GM12878 (cell line): ENCODE measurements at regions of chr17 and their contacts with region 1.

Region 1: DNA sequence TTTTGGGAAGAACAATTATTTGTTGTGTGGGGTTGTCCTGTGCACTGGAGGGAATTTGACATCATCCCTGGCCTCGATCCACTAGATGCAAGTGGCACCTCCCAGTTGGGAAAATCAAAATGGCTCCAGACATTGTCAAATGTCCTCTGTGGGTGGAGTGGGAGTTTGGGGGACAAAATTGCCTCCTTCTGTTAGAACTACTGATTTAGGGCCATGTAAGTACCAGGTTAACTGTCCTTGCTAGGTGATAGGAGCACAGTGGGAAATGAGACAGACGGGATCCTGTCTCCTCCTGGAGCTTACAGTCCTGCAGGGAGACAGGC is 56.8 kb downstream of the ARHGAP23 start:
- DNase-seq: peak; percentile 21
- ATAC-seq: no peak
- H3K4me3 ChIP-seq: peak overlapping the region; percentile 3; the same call in 1 of the 2 replicates
- H3K27ac ChIP-seq: peak overlapping the region; percentile 50
- H3K4me1 ChIP-seq: peaks cover 17% of the 10 kb centered on the region
- H3K27me3 ChIP-seq: no peaks in the 10 kb centered on the region
- CTCF ChIP-seq: no peak
- EP300 ChIP-seq: no peak
- POLR2A ChIP-seq: no peak
- RAD21 ChIP-seq: no peak

Region 2: DNA sequence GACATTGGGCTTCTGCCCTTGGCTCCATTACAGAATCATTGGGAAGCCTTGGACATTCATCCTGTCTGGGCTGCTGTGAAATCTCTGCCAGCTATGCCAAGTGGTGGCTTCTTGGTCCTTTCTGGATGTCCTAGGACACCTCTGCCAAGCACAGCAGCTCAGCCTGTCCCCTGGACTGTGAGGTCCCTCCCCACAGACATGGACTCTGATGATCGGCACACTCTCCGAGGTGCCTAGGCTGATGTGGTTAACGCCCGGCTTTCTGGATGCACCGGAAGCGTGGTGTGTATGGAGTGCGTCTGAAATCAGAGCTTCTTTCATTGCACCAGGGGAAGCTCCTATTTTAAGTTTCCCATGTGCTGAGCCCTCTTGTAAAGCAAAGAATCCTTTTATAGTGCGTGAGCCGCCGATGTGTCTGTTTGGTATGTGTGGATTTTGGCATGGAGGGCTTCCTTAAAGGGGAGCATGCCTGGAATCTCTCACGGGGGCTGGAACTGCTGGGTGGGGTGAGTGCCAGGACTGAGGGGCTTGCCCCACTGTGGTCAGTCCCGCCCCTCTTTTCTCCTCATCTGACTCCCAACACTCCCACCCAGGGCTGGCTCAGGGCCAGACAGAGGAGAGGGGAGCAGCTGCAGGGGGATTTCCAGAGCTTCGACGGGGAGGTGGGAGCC is 63.8 kb before region 1 on chr17:
- CTCF ChIA-PET with region 1: interaction called, 31 read pairs
- POLR2A ChIA-PET with region 1: interaction called, 4 read pairs
- RAD21 ChIA-PET with region 1: interaction called, 7 read pairs
- SMC1A ChIA-PET with region 1: interaction called, 11 read pairs
- in situ Hi-C with region 1: no loop called
- intact Hi-C with region 1: loop called (anchors 1 kb)
- DNase-seq: no peak
- ATAC-seq: no peak
- H3K4me3 ChIP-seq: no peak overlapping the region
- H3K27ac ChIP-seq: no peak overlapping the region
- H3K4me1 ChIP-seq: peaks cover 6% of the 10 kb centered on the region
- H3K27me3 ChIP-seq: peaks cover 4 to 6% of the 10 kb centered on the region in 2 experiments; a peak in 3 of 4 replicates
- CTCF ChIP-seq: no peak
- EP300 ChIP-seq: no peak
- POLR2A ChIP-seq: no peak
- RAD21 ChIP-seq: no peak

Region 3: DNA sequence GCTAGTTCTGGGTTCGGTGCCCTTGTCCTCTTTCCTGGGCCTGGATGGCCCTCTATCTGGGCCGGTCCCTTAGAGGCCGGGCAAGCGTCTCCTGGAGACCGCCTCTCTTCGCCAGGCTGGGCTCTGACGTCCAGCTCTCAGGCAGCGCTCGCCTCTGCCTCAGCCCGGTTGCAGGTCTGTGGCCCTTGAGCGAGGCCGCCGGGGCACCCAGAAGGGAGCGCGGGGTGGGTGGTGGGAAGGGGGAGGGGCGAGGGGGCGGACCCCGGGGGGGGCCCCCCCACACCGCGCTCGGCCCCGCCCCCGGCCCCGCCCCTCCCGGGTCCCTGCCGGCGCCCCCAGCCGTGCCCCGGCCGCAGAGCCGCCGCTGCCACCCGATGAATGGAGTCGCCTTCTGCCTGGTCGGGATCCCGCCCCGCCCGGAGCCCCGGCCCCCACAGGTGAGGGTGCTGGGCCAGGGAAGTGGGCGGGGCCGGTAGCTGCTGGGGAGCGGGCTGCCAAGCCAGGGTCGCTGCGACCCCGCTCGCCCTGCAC is 56.9 kb before region 1 on chr17 and contains the start of gene ARHGAP23:
- CTCF ChIA-PET with region 1: interaction called, 31 read pairs
- POLR2A ChIA-PET with region 1: interaction called, 4 read pairs
- RAD21 ChIA-PET with region 1: interaction called, 7 read pairs
- SMC1A ChIA-PET with region 1: interaction called, 8 read pairs
- in situ Hi-C with region 1: no loop called
- intact Hi-C with region 1: loop called (anchors 1 kb)
- DNase-seq: no peak
- ATAC-seq: peak; percentile 71
- H3K4me3 ChIP-seq: peak within 1 kb of the TSS; percentile 80
- H3K27ac ChIP-seq: no peak within 1 kb of the TSS
- H3K4me1 ChIP-seq: peaks cover 4% of the 10 kb centered on the region
- H3K27me3 ChIP-seq: no peaks in the 10 kb centered on the region; a peak in 1 of 4 replicates
- CTCF ChIP-seq: no peak
- EP300 ChIP-seq: no peak
- POLR2A ChIP-seq: no peak; the same call in 1 of the 2 replicates
- RAD21 ChIP-seq: no peak
- polyA plus RNA-seq, gene ARHGAP23: 0.23 to 0.35 TPM

Region 4: DNA sequence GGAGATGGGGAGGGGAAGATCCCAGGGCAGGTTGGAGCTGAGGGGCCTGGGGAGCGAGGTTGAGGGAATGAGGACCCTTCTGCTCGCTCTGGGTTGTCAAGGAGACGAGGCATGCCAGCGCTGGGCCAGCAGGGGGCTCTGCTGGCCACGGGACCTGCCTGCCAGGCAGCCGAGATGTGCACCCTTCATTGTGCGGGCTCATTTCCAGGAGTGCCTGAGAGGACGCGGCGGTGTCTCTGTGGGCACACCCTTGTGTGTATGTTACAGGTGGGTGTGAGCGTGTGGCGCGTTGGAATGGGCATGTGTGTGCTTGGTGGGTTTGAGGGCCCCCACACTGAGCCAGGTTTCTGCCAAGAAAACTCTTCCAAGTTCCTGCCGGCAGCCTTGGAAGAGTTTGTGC is 41.0 kb before region 1 on chr17:
- CTCF ChIA-PET with region 1: interaction called, 6 read pairs
- POLR2A ChIA-PET with region 1: no interaction called
- RAD21 ChIA-PET with region 1: no interaction called
- SMC1A ChIA-PET with region 1: interaction called, 4 read pairs
- in situ Hi-C with region 1: loop called (anchors 5 kb)
- intact Hi-C with region 1: loop called (anchors 1 kb)
- DNase-seq: no peak
- ATAC-seq: peak; percentile 94
- H3K4me3 ChIP-seq: no peak overlapping the region
- H3K27ac ChIP-seq: no peak overlapping the region
- H3K4me1 ChIP-seq: peaks cover 5% of the 10 kb centered on the region; the same call in 1 of the 2 replicates
- H3K27me3 ChIP-seq: no peaks in the 10 kb centered on the region
- CTCF ChIP-seq: peak; percentile 85 to 93 (median 89)
- EP300 ChIP-seq: no peak
- POLR2A ChIP-seq: no peak
- RAD21 ChIP-seq: peak; percentile 70

Region 5: GRCh38 chr17:38584350-38584925 is 99.3 kb after region 1 on chr17:
- CTCF ChIA-PET with region 1: no interaction called
- POLR2A ChIA-PET with region 1: no interaction called
- RAD21 ChIA-PET with region 1: no interaction called
- SMC1A ChIA-PET with region 1: no interaction called
- in situ Hi-C with region 1: loop called (anchors 5 kb)
- intact Hi-C with region 1: no loop called
- DNase-seq: no peak
- ATAC-seq: peak; percentile 93
- H3K4me3 ChIP-seq: no peak overlapping the region
- H3K27ac ChIP-seq: no peak overlapping the region
- H3K4me1 ChIP-seq: peaks cover 8% of the 10 kb centered on the region
- H3K27me3 ChIP-seq: peaks cover 0 to 4% of the 10 kb centered on the region in 2 experiments; a peak in 3 of 4 replicates
- CTCF ChIP-seq: peak; percentile 88 to 93 (median 91)
- EP300 ChIP-seq: no peak
- POLR2A ChIP-seq: no peak
- RAD21 ChIP-seq: peak; percentile 75